SK-N-SH (cell line): ENCODE measurements at regions of chr5 and their contacts with region 1.

Region 1: GRCh38 chr5:95646554-95647431 is at the start of gene RFESD:
- DNase-seq: peak; percentile 94
- H3K4me3 ChIP-seq: peak within 1 kb of the TSS; percentile 59 to 66
- H3K27ac ChIP-seq: peak within 1 kb of the TSS; percentile 64 to 89
- H3K4me1 ChIP-seq: peaks cover 0 to 6% of the 10 kb centered on the region in 2 experiments; a peak in 2 of 4 replicates
- H3K27me3 ChIP-seq: no peaks in the 10 kb centered on the region
- CTCF ChIP-seq: no peak
- EP300 ChIP-seq: peak; percentile 28 to 35; a peak in 2 of 4 replicates
- RAD21 ChIP-seq: no peak
- polyA plus RNA-seq, gene RFESD: 1.8 and 3.1 TPM in 2 replicates

Region 2: GRCh38 chr5:95471942-95472341 is 174.9 kb before region 1 on chr5:
- CTCF ChIA-PET with region 1: no interaction called
- POLR2A ChIA-PET with region 1: no interaction called
- DNase-seq: no peak
- H3K4me3 ChIP-seq: no peak overlapping the region
- H3K27ac ChIP-seq: no peak overlapping the region
- H3K4me1 ChIP-seq: no peaks in the 10 kb centered on the region
- H3K27me3 ChIP-seq: no peaks in the 10 kb centered on the region
- CTCF ChIP-seq: no peak
- EP300 ChIP-seq: no peak
- RAD21 ChIP-seq: no peak

Region 3: GRCh38 chr5:95631991-95632675 is 14.7 kb before region 1 on chr5:
- CTCF ChIA-PET with region 1: interaction called, 14 read pairs
- POLR2A ChIA-PET with region 1: no interaction called
- DNase-seq: no peak
- H3K4me3 ChIP-seq: no peak overlapping the region
- H3K27ac ChIP-seq: peak overlapping the region in 1 of 2 experiments; percentile 39; a peak in 1 of 4 replicates
- H3K4me1 ChIP-seq: peaks cover 0 to 5% of the 10 kb centered on the region in 2 experiments; a peak in 1 of 4 replicates
- H3K27me3 ChIP-seq: no peaks in the 10 kb centered on the region
- CTCF ChIP-seq: no peak
- EP300 ChIP-seq: no peak
- RAD21 ChIP-seq: no peak

Region 4: GRCh38 chr5:95730730-95731570 is 84.2 kb after region 1 on chr5 and contains the start of gene RHOBTB3:
- CTCF ChIA-PET with region 1: interaction called, 12 read pairs
- POLR2A ChIA-PET with region 1: interaction called, 25 read pairs
- DNase-seq: peak; percentile 91
- H3K4me3 ChIP-seq: peak within 1 kb of the TSS; percentile 80 to 98
- H3K27ac ChIP-seq: peak within 1 kb of the TSS; percentile 77 to 97
- H3K4me1 ChIP-seq: peaks cover 22 to 38% of the 10 kb centered on the region in 2 experiments; a peak in 3 of 4 replicates
- H3K27me3 ChIP-seq: no peaks in the 10 kb centered on the region
- CTCF ChIP-seq: no peak
- EP300 ChIP-seq: no peak; a peak in 1 of 4 replicates
- RAD21 ChIP-seq: peak; percentile 23; the same call in 1 of the 2 replicates
- polyA plus RNA-seq, gene RHOBTB3: 59.3 and 73.6 TPM in 2 replicates

Region 5: DNA sequence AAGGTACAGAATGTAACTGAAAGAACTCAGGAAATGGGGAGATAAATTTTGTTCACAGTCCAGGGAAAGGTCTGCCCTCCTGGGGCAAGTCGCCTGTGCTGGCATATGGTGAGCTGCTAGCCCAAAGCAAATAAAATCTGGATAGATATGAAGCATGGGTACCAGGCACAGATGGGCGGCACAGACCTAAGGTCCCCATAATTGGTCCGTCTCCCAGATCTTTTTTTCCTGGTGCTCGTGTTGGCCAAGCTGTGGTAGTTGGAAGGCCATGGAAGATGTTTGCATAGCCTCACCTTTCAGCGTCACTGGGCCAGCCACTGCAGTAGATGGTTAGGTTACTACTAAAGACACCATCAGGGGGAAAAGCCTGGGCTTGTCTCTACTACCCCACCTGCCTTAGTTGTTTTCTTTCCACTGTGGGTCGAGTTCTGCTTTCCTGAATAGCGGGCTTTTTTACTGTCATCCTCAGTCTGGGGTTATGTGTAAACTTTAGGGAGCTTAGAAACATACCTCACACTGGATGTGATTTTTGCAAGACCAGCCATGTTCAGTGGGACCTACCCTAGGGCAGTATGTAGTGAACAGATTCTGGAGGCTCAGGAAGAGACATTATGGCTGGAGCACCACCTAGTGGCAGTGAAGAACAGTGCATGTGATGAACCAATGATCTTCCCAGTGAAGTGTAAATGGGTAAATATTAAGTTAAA is 199.9 kb after region 1 on chr5:
- CTCF ChIA-PET with region 1: interaction called, 139 read pairs
- POLR2A ChIA-PET with region 1: interaction called, 3 read pairs
- DNase-seq: peak; percentile 83
- H3K4me3 ChIP-seq: no peak overlapping the region; a peak in 1 of 4 replicates
- H3K27ac ChIP-seq: no peak overlapping the region
- H3K4me1 ChIP-seq: peaks cover 3 to 7% of the 10 kb centered on the region in 2 experiments; a peak in 2 of 4 replicates
- H3K27me3 ChIP-seq: no peaks in the 10 kb centered on the region
- CTCF ChIP-seq: peak; percentile 97
- EP300 ChIP-seq: no peak
- RAD21 ChIP-seq: peak; percentile 98

Region 6: DNA sequence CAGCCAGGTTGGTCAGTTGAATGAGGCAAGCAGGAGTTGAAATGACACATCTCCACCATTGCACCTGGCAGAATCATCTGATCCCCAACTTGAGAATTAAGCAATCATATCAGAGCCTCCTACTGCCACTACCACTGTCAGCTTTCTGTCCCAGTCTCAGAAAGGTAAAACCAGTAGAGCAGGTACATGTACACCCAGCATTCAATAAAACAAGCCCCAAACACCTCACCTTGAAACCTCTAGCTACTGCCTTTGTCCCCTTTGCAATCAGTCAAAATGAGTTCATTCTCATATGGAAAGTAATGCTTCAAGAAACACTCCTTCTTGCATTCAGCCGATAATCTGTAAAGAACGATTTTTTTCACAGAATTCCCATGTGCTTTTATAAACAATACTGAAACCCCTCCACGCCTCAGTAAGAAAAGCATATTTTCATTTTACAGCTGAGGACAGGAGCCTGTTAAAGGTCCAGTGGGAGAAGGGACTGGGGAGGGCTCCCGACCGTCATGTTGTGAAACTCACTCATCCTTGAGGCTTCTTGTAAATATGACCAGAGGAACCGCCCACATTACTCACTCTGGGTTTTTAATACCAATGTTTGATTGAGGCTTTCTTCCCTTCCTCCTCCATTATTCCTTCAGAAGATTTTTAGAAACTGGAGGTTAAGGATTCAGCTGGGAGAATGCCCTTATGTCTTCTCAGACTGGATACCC is 237.0 kb after region 1 on chr5:
- CTCF ChIA-PET with region 1: no interaction called
- POLR2A ChIA-PET with region 1: no interaction called
- DNase-seq: no peak
- H3K4me3 ChIP-seq: no peak overlapping the region
- H3K27ac ChIP-seq: no peak overlapping the region
- H3K4me1 ChIP-seq: no peaks in the 10 kb centered on the region
- H3K27me3 ChIP-seq: no peaks in the 10 kb centered on the region
- CTCF ChIP-seq: no peak
- EP300 ChIP-seq: no peak
- RAD21 ChIP-seq: no peak